IMR-90 (cell line): ENCODE measurements at regions of chr7 and their contacts with region 1.

Region 1: GRCh38 chr7:5494683-5495561 is 71.3 kb upstream of the TNRC18 start:
- DNase-seq: peak; percentile 69
- ATAC-seq: peak; percentile 93
- H3K4me3 ChIP-seq: no peak overlapping the region
- H3K27ac ChIP-seq: no peak overlapping the region; the same call in 1 of the 2 replicates
- H3K4me1 ChIP-seq: peaks cover 6% of the 10 kb centered on the region
- H3K27me3 ChIP-seq: no peaks in the 10 kb centered on the region
- CTCF ChIP-seq: peak; percentile 97
- POLR2A ChIP-seq: peak; percentile 44; the same call in 1 of the 2 replicates
- RAD21 ChIP-seq: peak; percentile 98

Region 2: GRCh38 chr7:5354460-5355232 is 140.3 kb before region 1 on chr7:
- CTCF ChIA-PET with region 1: no interaction called
- POLR2A ChIA-PET with region 1: no interaction called
- dilution Hi-C with region 1: no loop called
- in situ Hi-C with region 1: no loop called
- intact Hi-C with region 1: no loop called
- DNase-seq: peak; percentile 43
- ATAC-seq: peak; percentile 56
- H3K4me3 ChIP-seq: no peak overlapping the region
- H3K27ac ChIP-seq: no peak overlapping the region
- H3K4me1 ChIP-seq: peaks cover 10% of the 10 kb centered on the region
- H3K27me3 ChIP-seq: no peaks in the 10 kb centered on the region
- CTCF ChIP-seq: no peak
- POLR2A ChIP-seq: no peak
- RAD21 ChIP-seq: no peak

Region 3: GRCh38 chr7:5557920-5558401 is 63.0 kb after region 1 on chr7:
- CTCF ChIA-PET with region 1: interaction called, 16 read pairs
- POLR2A ChIA-PET with region 1: no interaction called
- dilution Hi-C with region 1: no loop called
- in situ Hi-C with region 1: no loop called
- intact Hi-C with region 1: loop called (anchors 2 kb)
- DNase-seq: peak; percentile 11
- ATAC-seq: no peak
- H3K4me3 ChIP-seq: no peak overlapping the region
- H3K27ac ChIP-seq: peak overlapping the region; percentile 77
- H3K4me1 ChIP-seq: peaks cover 24% of the 10 kb centered on the region
- H3K27me3 ChIP-seq: no peaks in the 10 kb centered on the region
- CTCF ChIP-seq: no peak
- POLR2A ChIP-seq: no peak
- RAD21 ChIP-seq: no peak

Region 4: GRCh38 chr7:5665094-5666025 is 170.4 kb after region 1 on chr7:
- CTCF ChIA-PET with region 1: interaction called, 12 read pairs
- POLR2A ChIA-PET with region 1: no interaction called
- dilution Hi-C with region 1: no loop called
- in situ Hi-C with region 1: loop called (anchors 5 kb)
- intact Hi-C with region 1: loop called (anchors 1 kb)
- DNase-seq: peak; percentile 76
- ATAC-seq: peak; percentile 89
- H3K4me3 ChIP-seq: no peak overlapping the region
- H3K27ac ChIP-seq: no peak overlapping the region
- H3K4me1 ChIP-seq: peaks cover 10% of the 10 kb centered on the region
- H3K27me3 ChIP-seq: no peaks in the 10 kb centered on the region
- CTCF ChIP-seq: peak; percentile 89
- POLR2A ChIP-seq: no peak
- RAD21 ChIP-seq: peak; percentile 86

Region 5: GRCh38 chr7:5704534-5704922 is 209.6 kb after region 1 on chr7:
- CTCF ChIA-PET with region 1: interaction called, 5 read pairs
- POLR2A ChIA-PET with region 1: no interaction called
- dilution Hi-C with region 1: no loop called
- in situ Hi-C with region 1: no loop called
- intact Hi-C with region 1: loop called (anchors 1 kb)
- DNase-seq: peak; percentile 84
- ATAC-seq: peak; percentile 81
- H3K4me3 ChIP-seq: no peak overlapping the region
- H3K27ac ChIP-seq: no peak overlapping the region
- H3K4me1 ChIP-seq: peaks cover 20% of the 10 kb centered on the region
- H3K27me3 ChIP-seq: no peaks in the 10 kb centered on the region
- CTCF ChIP-seq: peak; percentile 93
- POLR2A ChIP-seq: no peak
- RAD21 ChIP-seq: peak; percentile 91